ENCODE measurements at regions of chr12 and their contacts with region 1.

Region 1: DNA sequence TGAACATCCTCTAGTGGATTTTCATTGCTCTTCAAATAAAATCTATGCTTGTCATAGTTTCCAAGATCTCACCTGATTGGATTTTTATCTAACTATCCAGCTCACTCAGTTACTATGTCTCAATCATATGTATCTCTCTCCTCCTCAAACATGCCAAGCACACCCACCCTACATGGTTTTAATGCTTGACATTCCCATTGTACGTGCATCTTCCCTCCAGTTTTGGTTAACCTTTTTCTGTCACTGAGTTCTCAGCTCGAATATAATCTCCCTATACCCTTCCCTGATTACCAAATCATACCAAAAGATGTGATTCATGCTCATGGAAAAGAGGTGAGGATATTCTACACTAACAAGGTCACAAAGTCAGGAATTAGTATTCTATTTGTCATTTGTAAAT is 12.0 kb upstream of the PTPRQ start:
- DNase-seq: no peak
- H3K4me3 ChIP-seq: no peak overlapping the region
- H3K27ac ChIP-seq: no peak overlapping the region
- H3K4me1 ChIP-seq: no peaks in the 10 kb centered on the region
- H3K27me3 ChIP-seq: no peaks in the 10 kb centered on the region
- CTCF ChIP-seq: no peak
- EP300 ChIP-seq: no peak
- POLR2A ChIP-seq: no peak

Region 2: DNA sequence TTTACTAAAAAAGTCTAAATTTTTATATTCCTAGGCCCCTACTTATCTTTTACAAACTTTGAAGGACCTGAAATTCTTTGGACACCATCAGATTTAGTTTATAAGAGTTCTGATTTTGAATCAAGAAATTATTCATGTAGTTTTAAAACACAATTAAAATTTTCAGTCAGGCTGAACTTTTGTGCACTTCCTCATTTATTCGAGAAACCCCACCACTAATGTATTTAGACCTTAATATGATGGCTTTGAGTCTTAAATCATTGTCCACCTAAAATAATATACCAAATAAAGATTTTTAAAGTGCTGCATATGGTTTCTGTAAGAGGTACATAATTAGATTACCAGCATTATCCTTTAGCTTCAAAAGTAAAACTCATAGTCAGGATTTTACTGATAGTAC is 844.7 kb before region 1 on chr12:
- intact Hi-C with region 1: loop called (anchors 10 kb)
- DNase-seq: no peak
- H3K4me3 ChIP-seq: no peak overlapping the region
- H3K27ac ChIP-seq: no peak overlapping the region
- H3K4me1 ChIP-seq: peaks cover 0 to 5% (median 0%) of the 10 kb centered on the region in 4 donors
- H3K27me3 ChIP-seq: no peaks in the 10 kb centered on the region
- CTCF ChIP-seq: no peak
- EP300 ChIP-seq: no peak
- POLR2A ChIP-seq: no peak

Region 3: DNA sequence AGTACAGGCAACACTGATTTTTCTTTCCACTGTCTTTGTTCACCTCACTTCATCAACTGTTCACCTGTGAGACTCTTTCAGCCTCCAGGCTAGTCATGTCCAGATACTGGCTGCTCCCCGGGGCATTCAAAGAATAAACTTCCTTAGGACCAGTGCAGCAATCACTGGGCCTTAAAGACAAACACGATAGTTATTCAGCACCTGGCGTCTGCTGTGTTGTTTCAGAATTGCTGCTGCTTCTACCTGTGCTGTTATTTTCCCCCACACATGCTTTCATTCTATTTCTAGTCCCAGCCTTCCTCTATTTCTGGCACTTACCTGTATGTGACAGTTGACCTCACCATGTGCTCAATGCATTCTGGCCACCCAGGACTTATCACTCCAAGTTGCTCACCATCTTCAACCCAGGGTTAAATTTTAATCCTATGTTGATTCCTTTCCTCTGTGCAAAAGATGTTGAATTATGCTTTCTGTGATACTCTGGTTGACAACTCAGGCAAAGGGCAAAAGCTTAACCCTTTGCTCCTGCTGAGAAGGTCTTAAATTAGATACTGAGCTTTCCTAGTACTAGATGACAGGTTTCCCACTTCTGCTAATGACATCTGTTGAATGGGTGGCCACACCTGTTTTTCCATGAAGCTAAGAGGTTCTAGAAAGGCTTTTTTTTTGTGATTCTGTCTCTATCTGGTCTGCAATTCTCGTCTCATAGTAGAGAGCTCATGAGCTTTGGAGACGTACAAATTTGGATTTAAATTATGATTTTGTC is 53.4 kb after region 1 on chr12:
- intact Hi-C with region 1: no loop called
- DNase-seq: no peak
- H3K4me3 ChIP-seq: no peak overlapping the region
- H3K27ac ChIP-seq: no peak overlapping the region
- H3K4me1 ChIP-seq: no peaks in the 10 kb centered on the region
- H3K27me3 ChIP-seq: no peaks in the 10 kb centered on the region
- CTCF ChIP-seq: no peak
- EP300 ChIP-seq: no peak
- POLR2A ChIP-seq: no peak

Region 4: GRCh38 chr12:80580254-80580653 is 148.2 kb after region 1 on chr12:
- intact Hi-C with region 1: no loop called
- DNase-seq: no peak
- H3K4me3 ChIP-seq: no peak overlapping the region
- H3K27ac ChIP-seq: no peak overlapping the region
- H3K4me1 ChIP-seq: no peaks in the 10 kb centered on the region
- H3K27me3 ChIP-seq: no peaks in the 10 kb centered on the region
- CTCF ChIP-seq: no peak
- EP300 ChIP-seq: no peak
- POLR2A ChIP-seq: no peak

Measured in sigmoid colon (tissue), 7 donors.